ENCODE measurements at regions of chr12 and their contacts with region 1.

Region 1: DNA sequence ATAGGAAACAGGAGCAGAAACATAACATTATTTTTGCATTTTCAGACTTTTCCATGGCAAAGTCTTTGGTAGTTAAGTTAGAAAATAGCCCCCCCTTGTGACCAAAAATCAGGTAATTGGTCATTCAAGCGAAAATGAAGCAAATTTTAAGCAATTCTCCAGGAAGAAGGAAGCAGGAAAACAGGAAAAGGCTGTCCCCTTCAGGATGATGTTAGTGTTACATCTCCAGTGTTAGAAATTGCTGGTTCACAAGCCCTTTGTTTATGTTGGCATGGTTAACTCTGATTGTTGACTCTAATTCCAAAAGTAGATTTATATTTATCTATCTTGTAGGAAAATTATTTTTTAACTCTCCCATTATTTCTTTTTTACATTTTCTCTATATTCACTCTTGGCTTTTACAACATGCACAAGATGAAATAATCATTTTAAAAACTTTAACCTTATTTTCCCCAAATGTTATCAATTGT is 18.8 kb upstream of the GAS2L3 start:
- DNase-seq: no peak
- ATAC-seq: peak; percentile 76 to 89 (median 81)
- H3K4me3 ChIP-seq: no peak overlapping the region
- H3K27ac ChIP-seq: peak overlapping the region; percentile 13 to 48 (median 39)
- H3K4me1 ChIP-seq: peaks cover 0 to 65% (median 8%) of the 10 kb centered on the region in 4 donors
- H3K27me3 ChIP-seq: no peaks in the 10 kb centered on the region
- CTCF ChIP-seq: peak; percentile 87 to 98 (median 92)
- POLR2A ChIP-seq: no peak

Region 2: GRCh38 chr12:100391856-100392255 is 162.8 kb before region 1 on chr12:
- intact Hi-C with region 1: loop called in 1 of 2 experiments (anchors 5 kb)
- DNase-seq: peak in 1 of 3 donors; percentile 56
- ATAC-seq: peak; percentile 93 to 98 (median 94)
- H3K4me3 ChIP-seq: no peak overlapping the region
- H3K27ac ChIP-seq: no peak overlapping the region
- H3K4me1 ChIP-seq: no peaks in the 10 kb centered on the region
- H3K27me3 ChIP-seq: no peaks in the 10 kb centered on the region
- CTCF ChIP-seq: peak; percentile 59 to 75 (median 71)
- POLR2A ChIP-seq: no peak

Region 3: GRCh38 chr12:100955139-100955538 is 400.5 kb after region 1 on chr12:
- intact Hi-C with region 1: no loop called
- DNase-seq: no peak
- ATAC-seq: no peak
- H3K4me3 ChIP-seq: no peak overlapping the region
- H3K27ac ChIP-seq: no peak overlapping the region
- H3K4me1 ChIP-seq: no peaks in the 10 kb centered on the region
- H3K27me3 ChIP-seq: no peaks in the 10 kb centered on the region
- CTCF ChIP-seq: no peak
- POLR2A ChIP-seq: no peak

Measured in right lobe of liver (tissue), 6 donors.